A549 (cell line): ENCODE measurements at regions of chr2 and their contacts with region 1.

Region 1: GRCh38 chr2:68157402-68158133 is at the start of gene PNO1:
- DNase-seq: peak; percentile 95 to 97
- ATAC-seq: peak; percentile 89 to 94
- H3K4me3 ChIP-seq: peak within 1 kb of the TSS; percentile 75
- H3K27ac ChIP-seq: peak within 1 kb of the TSS; percentile 91 to 93
- H3K4me1 ChIP-seq: peaks cover 18% of the 10 kb centered on the region
- CTCF ChIP-seq: no peak
- EP300 ChIP-seq: no peak
- POLR2A ChIP-seq: peak; percentile 59
- RAD21 ChIP-seq: no peak
- polyA plus RNA-seq, gene PNO1: 50.1 and 63.2 TPM in 2 replicates

Region 2: DNA sequence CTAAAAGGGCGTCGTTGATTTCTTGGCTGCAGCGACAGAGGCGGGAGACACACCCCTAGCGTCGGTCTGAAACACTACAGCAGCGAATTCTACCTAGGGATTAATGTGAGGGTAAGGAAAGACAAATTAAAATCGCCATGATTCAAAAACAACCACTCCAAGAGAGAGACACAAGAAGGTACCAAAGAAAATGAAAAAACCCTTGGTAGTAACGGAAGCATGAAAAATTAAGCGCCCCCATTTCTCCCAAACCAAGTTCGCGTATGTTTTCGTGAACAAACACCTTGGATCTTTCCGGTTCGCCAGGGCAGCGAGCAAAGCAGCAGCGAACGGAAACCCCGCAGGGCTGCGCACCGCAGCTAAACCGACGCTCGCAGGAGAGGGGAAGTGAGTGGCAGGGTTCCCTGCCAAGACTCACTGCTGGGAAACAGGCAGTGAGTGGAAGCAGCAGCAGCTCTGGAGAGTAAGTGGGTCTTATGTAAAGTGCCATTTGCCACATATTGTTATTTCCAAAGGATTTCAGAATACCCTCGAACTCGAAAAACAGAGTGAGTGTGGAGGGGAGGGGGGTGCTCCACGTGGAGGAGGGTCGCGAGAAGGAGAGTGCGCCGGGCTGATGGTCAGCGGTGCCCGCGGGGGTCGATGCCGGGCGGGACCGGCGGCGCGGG is 93.8 kb after region 1 on chr2:
- CTCF ChIA-PET with region 1: no interaction called
- POLR2A ChIA-PET with region 1: interaction called, 17 read pairs
- DNase-seq: peak; percentile 79 to 86
- ATAC-seq: peak; percentile 60 to 79
- H3K4me3 ChIP-seq: peak overlapping the region; percentile 95
- H3K27ac ChIP-seq: peak overlapping the region; percentile 97 to 99
- H3K4me1 ChIP-seq: peaks cover 46% of the 10 kb centered on the region
- CTCF ChIP-seq: peak; percentile 57
- EP300 ChIP-seq: no peak
- POLR2A ChIP-seq: no peak
- RAD21 ChIP-seq: peak; percentile 44 to 46; a peak in 3 of 5 replicates

Region 3: GRCh38 chr2:68379184-68379708 is 221.7 kb after region 1 on chr2:
- CTCF ChIA-PET with region 1: no interaction called
- POLR2A ChIA-PET with region 1: no interaction called
- DNase-seq: no peak
- ATAC-seq: no peak
- H3K4me3 ChIP-seq: no peak overlapping the region
- H3K27ac ChIP-seq: no peak overlapping the region
- H3K4me1 ChIP-seq: no peaks in the 10 kb centered on the region
- CTCF ChIP-seq: no peak
- EP300 ChIP-seq: no peak
- POLR2A ChIP-seq: no peak
- RAD21 ChIP-seq: no peak